HepG2 (cell line): ENCODE measurements at regions of chr13 and their contacts with region 1.

Region 1: DNA sequence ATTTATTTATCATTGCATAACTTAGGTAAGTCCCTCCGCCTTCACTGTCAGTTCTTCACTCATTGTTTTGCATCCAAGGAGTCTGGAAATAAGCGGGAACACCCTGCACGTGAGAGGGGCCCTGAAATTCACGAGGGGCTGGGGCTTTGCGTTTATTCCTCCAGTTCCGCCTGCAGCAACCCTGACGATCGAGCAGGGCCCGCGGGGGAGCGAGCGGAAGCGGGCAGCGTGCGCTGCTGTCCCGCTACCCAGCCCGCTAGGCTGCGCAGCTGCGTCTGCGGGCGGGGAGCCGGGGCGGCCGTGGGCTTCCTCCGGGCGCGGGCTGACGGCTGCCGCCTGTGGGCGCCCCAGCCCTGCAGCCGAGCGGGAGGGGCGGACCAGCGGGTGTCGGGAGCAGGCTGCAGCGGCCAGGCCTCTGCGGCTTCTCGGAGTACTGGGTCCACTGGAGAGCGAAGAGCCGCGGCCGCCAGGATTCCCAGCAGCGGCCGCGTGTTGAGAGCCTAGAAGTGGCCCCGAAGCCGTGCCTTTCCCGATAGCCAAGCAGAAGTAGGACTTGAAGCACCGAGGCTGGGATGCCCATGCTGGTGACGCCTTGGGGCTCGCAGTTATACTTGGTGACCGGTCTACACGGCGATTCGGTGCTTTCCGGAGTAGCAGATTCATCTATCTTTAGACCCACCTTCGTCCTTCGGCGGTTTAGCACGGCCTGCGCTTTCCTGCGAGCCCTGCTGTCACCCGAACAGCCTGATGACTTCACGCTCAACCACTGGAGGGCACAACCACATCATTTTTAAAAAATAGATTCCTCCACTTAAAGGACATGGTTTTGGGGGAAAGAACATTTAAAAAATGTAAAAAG is 32.9 kb upstream of the SACS start:
- DNase-seq: peak; percentile 54
- ATAC-seq: peak; percentile 97
- H3K4me3 ChIP-seq: peak overlapping the region; percentile 40 to 79 (median 50)
- H3K27ac ChIP-seq: no peak overlapping the region
- H3K4me1 ChIP-seq: peaks cover 25% of the 10 kb centered on the region
- H3K27me3 ChIP-seq: peaks cover 0 to 5% of the 10 kb centered on the region in 2 experiments; a peak in 2 of 5 replicates
- CTCF ChIP-seq: peak; percentile 68
- EP300 ChIP-seq: no peak
- POLR2A ChIP-seq: no peak
- RAD21 ChIP-seq: peak; percentile 65

Region 2: DNA sequence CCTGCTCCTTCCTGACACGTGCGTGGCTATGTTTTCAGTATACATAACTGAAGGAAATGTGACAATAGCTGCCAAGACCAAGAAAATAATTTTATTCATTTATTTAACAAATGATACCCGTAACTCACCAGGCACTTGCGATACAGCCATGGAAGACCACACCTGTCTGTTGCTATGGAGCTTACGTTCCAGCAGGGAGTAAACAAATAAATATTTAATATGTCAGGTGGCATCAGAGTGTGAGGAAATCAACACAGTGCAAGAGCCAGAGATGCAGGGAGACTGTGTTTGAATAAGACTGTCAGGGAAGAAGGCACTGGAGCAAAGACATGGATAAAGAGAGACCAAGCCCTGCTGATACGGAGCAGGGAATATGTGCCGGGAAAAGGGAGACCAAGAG is 400.8 kb before region 1 on chr13:
- CTCF ChIA-PET with region 1: no interaction called
- POLR2A ChIA-PET with region 1: no interaction called
- in situ Hi-C with region 1: no loop called
- intact Hi-C with region 1: no loop called
- DNase-seq: no peak
- ATAC-seq: no peak
- H3K4me3 ChIP-seq: no peak overlapping the region
- H3K27ac ChIP-seq: no peak overlapping the region
- H3K4me1 ChIP-seq: no peaks in the 10 kb centered on the region
- H3K27me3 ChIP-seq: no peaks in the 10 kb centered on the region; a peak in 1 of 5 replicates
- CTCF ChIP-seq: no peak
- EP300 ChIP-seq: no peak
- POLR2A ChIP-seq: no peak
- RAD21 ChIP-seq: no peak

Region 3: DNA sequence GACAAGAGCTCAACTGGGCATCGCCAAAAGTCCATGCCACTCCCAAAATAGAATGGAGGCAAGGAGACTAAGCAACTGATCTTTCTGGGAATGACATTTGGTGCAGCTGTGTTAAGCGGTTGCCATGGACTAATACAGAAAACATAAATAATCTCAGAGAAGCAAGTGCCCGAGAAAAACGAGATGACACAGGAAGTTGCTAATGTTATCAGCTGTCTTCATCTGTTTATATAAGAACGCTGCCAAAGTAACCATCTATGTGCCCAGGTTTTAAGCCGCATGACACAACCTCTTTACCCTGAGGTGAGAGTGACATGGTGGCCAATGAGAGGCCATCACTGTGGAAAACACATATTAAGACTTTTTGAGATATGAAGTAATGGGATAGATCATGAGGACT is 22.1 kb after region 1 on chr13:
- CTCF ChIA-PET with region 1: no interaction called
- POLR2A ChIA-PET with region 1: no interaction called
- in situ Hi-C with region 1: no loop called
- intact Hi-C with region 1: no loop called
- DNase-seq: peak; percentile 46
- ATAC-seq: no peak
- H3K4me3 ChIP-seq: no peak overlapping the region
- H3K27ac ChIP-seq: no peak overlapping the region
- H3K4me1 ChIP-seq: peaks cover 5% of the 10 kb centered on the region; the same call in 1 of the 2 replicates
- H3K27me3 ChIP-seq: no peaks in the 10 kb centered on the region; a peak in 1 of 5 replicates
- CTCF ChIP-seq: no peak
- EP300 ChIP-seq: no peak
- POLR2A ChIP-seq: no peak
- RAD21 ChIP-seq: no peak

Region 4: DNA sequence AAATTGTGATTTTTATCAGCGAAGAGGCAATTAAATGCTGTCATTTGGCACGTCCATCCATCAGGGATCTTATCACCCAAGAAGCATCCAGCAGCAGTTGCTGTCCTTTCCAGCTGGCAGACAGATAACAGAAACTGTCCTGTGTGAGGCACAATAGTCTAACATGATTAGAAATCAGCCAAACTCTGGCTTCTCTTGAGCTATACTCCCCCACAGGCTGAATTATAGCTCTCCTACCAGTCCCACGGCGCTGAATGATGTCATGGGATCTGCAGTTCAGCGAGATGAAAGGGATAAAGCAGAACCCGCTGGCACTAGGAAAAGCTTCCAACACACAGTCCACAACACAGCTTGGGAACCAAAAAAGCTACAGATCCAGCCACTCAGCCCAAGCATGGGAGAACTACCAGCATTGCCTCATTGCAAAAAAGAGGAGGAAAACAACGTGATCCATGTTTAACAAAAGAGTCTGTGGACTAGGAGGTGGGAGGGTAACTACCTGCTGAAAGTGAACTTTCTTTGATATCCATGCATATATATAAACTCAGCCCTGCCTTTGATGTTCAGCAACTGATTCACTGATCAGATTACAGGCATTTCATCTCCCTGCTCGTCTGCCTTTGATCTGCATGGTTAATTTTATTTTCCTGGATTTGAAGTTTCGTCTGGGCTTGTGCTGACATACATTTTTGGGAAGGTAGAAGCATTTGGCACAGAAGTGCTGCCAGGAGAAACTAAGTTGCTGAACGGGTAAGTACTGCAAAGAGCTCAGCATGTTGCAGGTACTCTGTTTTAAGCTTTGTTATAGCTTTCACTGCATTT is 103.9 kb after region 1 on chr13 and contains the start of gene TNFRSF19:
- CTCF ChIA-PET with region 1: interaction called, 3 read pairs
- POLR2A ChIA-PET with region 1: no interaction called
- in situ Hi-C with region 1: loop called (anchors 5 kb)
- intact Hi-C with region 1: loop called (anchors 2 kb)
- DNase-seq: peak; percentile 98
- ATAC-seq: peak; percentile 88
- H3K4me3 ChIP-seq: peak within 1 kb of the TSS; percentile 58 to 94 (median 66)
- H3K27ac ChIP-seq: peak within 1 kb of the TSS; percentile 84
- H3K4me1 ChIP-seq: peaks cover 64% of the 10 kb centered on the region
- H3K27me3 ChIP-seq: no peaks in the 10 kb centered on the region
- CTCF ChIP-seq: 0 out of 2 replicates have a peak, but pooled peaks have one; percentile 13
- EP300 ChIP-seq: peak; percentile 67 to 87; a peak in 3 of 4 replicates
- POLR2A ChIP-seq: peak in 1 of 2 experiments; percentile 63; a peak in 2 of 4 replicates
- RAD21 ChIP-seq: no peak
- total RNA-seq, gene TNFRSF19: 47.7 and 77.7 TPM in 2 replicates

Region 5: GRCh38 chr13:23579072-23579895 is 112.9 kb after region 1 on chr13:
- CTCF ChIA-PET with region 1: no interaction called
- POLR2A ChIA-PET with region 1: no interaction called
- in situ Hi-C with region 1: loop called (anchors 5 kb)
- intact Hi-C with region 1: loop called (anchors 2 kb)
- DNase-seq: peak; percentile 79
- ATAC-seq: peak; percentile 96
- H3K4me3 ChIP-seq: peak overlapping the region; percentile 65 to 93 (median 90)
- H3K27ac ChIP-seq: peak overlapping the region; percentile 77
- H3K4me1 ChIP-seq: peaks cover 75% of the 10 kb centered on the region
- H3K27me3 ChIP-seq: no peaks in the 10 kb centered on the region
- CTCF ChIP-seq: no peak
- EP300 ChIP-seq: no peak
- POLR2A ChIP-seq: peak in 1 of 2 experiments; percentile 77; a peak in 3 of 4 replicates
- RAD21 ChIP-seq: no peak; the same call in 1 of the 2 replicates

Region 6: GRCh38 chr13:23707674-23708073 is 241.3 kb after region 1 on chr13:
- CTCF ChIA-PET with region 1: no interaction called
- POLR2A ChIA-PET with region 1: no interaction called
- in situ Hi-C with region 1: loop called (anchors 10 kb)
- intact Hi-C with region 1: loop called (anchors 1 kb)
- DNase-seq: no peak
- ATAC-seq: peak; percentile 45; the same call in 2 of the 3 replicates
- H3K4me3 ChIP-seq: no peak overlapping the region
- H3K27ac ChIP-seq: no peak overlapping the region
- H3K4me1 ChIP-seq: peaks cover 20% of the 10 kb centered on the region
- H3K27me3 ChIP-seq: no peaks in the 10 kb centered on the region
- CTCF ChIP-seq: peak; percentile 42; the same call in 1 of the 2 replicates
- EP300 ChIP-seq: no peak
- POLR2A ChIP-seq: no peak
- RAD21 ChIP-seq: no peak

Region 7: DNA sequence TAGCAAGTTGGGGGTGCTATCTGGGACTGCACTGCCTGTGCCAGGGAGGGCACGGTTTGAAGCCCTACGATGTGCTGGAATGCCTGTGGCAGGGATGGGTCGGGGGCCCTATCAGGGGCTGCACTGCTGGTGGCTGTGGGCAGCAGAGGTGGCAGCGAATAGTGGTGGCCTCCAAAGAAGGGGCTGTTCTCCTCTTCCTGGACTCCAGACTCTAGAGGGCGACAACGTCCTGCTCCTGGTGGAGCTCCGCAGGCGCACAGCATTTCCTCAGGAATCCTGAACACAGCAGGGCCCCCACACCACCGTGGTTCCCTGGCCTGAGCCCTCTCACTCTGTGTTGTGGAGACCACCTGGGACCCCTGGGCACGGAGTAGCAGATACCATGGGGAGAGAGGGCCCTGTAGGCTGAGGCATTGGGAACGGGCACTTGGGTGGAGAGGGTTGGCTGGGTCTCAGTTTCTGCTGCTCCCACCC is 249.4 kb after region 1 on chr13:
- CTCF ChIA-PET with region 1: no interaction called
- POLR2A ChIA-PET with region 1: no interaction called
- in situ Hi-C with region 1: no loop called
- intact Hi-C with region 1: loop called (anchors 1 kb)
- DNase-seq: peak; percentile 62
- ATAC-seq: peak; percentile 93
- H3K4me3 ChIP-seq: peak overlapping the region; percentile 38 to 64 (median 49); a peak in 5 of 6 replicates
- H3K27ac ChIP-seq: no peak overlapping the region
- H3K4me1 ChIP-seq: peaks cover 46% of the 10 kb centered on the region
- H3K27me3 ChIP-seq: no peaks in the 10 kb centered on the region
- CTCF ChIP-seq: peak; percentile 94
- EP300 ChIP-seq: no peak
- POLR2A ChIP-seq: no peak
- RAD21 ChIP-seq: peak; percentile 89

Region 8: DNA sequence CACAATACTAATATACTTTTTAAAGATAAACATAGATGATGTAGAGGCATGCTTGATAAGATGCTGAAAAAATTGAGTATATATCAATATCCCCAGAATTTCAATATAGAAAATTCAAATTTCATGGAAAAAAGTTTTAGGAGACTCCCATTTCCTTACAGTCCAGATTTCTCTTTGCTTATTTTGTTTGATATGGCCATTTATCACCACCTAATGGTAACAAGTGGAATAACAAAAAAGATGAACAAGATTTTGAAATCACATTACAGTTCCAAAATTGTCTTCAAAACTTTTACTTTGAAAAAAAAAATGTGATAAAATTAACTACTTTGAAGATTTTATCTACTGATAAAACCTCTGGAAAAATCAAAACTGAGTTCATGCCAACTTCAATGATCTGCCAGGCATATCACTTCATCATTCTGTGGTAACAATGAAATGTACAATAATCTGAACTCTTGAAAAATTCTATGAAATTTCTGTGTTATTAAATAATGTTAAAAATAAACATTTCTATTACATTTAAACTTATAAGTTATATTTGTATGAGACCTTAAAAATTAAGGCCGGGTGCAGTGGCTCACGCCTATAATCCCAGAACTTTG is 405.3 kb after region 1 on chr13:
- CTCF ChIA-PET with region 1: interaction called, 12 read pairs
- POLR2A ChIA-PET with region 1: no interaction called
- in situ Hi-C with region 1: loop called (anchors 10 kb)
- intact Hi-C with region 1: loop called (anchors 1 kb)
- DNase-seq: peak; percentile 39
- ATAC-seq: no peak
- H3K4me3 ChIP-seq: no peak overlapping the region
- H3K27ac ChIP-seq: no peak overlapping the region
- H3K4me1 ChIP-seq: peaks cover 17% of the 10 kb centered on the region
- H3K27me3 ChIP-seq: no peaks in the 10 kb centered on the region
- CTCF ChIP-seq: peak; percentile 53
- EP300 ChIP-seq: no peak
- POLR2A ChIP-seq: no peak
- RAD21 ChIP-seq: no peak

Region 9: DNA sequence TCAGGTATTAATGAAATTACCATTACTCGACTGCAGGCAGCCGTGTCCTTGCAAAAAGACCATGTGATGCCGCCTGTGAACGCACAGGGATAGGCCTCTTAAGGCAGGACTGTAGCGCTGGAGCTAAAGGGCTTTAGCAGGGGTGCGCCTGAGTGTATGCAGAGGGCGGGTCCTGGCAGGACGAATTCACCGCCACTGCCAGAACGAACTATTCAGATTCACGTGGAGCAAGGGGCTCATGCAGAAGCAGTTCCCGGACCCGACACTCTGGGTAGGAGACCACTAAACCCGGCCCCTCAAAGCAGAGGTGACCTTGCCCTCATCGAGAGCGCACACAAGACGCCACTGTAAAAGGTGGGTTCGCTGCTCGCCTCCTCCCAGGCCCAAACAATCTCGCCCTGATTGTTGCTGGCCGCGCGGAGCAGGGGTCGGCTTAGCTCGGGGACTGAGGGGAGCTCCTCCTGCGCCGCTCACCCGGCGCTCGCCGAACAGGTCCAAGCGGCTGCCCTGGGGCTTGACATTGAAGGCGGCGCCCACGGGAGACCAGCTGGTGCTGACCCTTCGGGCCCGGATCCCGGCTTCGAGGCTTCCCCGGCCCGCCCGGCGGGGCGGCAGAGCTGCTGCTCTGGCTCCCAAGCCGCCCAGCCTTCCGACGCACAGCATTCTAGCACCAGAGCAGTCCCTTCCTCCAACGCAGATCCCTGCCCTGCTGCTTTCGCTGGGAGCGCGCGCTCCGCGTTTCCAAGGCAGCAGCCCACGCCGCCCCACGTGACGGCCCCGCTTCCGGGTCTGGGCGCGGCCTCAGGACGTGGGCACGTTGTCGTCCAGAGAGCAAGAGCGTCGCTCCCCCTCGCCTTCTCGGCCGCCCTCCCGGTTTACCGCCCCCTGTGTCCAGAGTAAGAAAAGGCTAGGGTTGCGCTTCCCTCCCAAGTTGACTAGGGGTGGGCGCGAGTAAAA is 422.6 kb after region 1 on chr13 and contains the start of gene MIPEP:
- CTCF ChIA-PET with region 1: interaction called, 3 read pairs
- POLR2A ChIA-PET with region 1: no interaction called
- in situ Hi-C with region 1: no loop called
- intact Hi-C with region 1: loop called (anchors 5 kb)
- DNase-seq: peak; percentile 90
- ATAC-seq: peak; percentile 97
- H3K4me3 ChIP-seq: peak within 1 kb of the TSS; percentile 78 to 100 (median 96)
- H3K27ac ChIP-seq: peak within 1 kb of the TSS; percentile 70
- H3K4me1 ChIP-seq: peaks cover 35% of the 10 kb centered on the region
- H3K27me3 ChIP-seq: no peaks in the 10 kb centered on the region; a peak in 1 of 5 replicates
- CTCF ChIP-seq: peak; percentile 97
- EP300 ChIP-seq: 0 out of 4 replicates have a peak, but pooled peaks of 1 of the 2 experiments have one; percentile 14
- POLR2A ChIP-seq: peak; percentile 39 to 42; a peak in 1 of 4 replicates
- RAD21 ChIP-seq: no peak
- total RNA-seq, gene MIPEP: 24.1 and 24.7 TPM in 2 replicates